ENCODE measurements at regions of chr5 and their contacts with region 1.

Region 1: GRCh38 chr5:69093771-69094482 is at the start of gene SLC30A5:
- DNase-seq: peak; percentile 99
- ATAC-seq: peak; percentile 99
- total RNA-seq, gene SLC30A5: 35.2 to 48.3 TPM

Region 2: GRCh38 chr5:69042915-69043658 is 50.8 kb before region 1 on chr5:
- intact Hi-C with region 1: loop called in 1 of 2 experiments (anchors 1 kb)
- DNase-seq: peak; percentile 58
- ATAC-seq: peak; percentile 95 to 97

Region 3: DNA sequence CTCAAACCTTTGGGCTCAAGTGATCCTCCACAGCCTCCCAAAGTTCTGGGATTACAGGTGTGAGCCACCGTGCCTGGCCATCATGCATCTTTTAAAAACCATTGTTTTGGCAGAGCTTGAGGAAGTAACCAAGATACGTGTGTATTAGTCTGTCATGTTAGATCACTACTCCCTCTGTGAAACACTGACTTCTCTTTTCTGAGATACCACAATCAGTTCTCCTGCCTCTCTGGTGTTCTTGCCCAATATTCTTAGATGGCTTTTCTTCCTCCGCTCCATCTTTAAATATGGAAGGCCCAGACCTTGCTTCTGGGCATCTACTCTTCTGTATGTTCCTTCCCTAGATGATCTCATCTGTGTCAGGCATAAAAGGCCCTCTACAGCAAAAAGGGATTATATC is 58.8 kb after region 1 on chr5:
- intact Hi-C with region 1: no loop called
- DNase-seq: no peak
- ATAC-seq: no peak

Region 4: GRCh38 chr5:69234457-69235268 is 140.7 kb after region 1 on chr5 and contains the start of gene CDK7:
- intact Hi-C with region 1: loop called in 1 of 2 experiments (anchors 10 kb)
- DNase-seq: peak; percentile 96
- ATAC-seq: peak; percentile 100
- total RNA-seq, gene CDK7: 11.1 to 14.4 TPM

Region 5: DNA sequence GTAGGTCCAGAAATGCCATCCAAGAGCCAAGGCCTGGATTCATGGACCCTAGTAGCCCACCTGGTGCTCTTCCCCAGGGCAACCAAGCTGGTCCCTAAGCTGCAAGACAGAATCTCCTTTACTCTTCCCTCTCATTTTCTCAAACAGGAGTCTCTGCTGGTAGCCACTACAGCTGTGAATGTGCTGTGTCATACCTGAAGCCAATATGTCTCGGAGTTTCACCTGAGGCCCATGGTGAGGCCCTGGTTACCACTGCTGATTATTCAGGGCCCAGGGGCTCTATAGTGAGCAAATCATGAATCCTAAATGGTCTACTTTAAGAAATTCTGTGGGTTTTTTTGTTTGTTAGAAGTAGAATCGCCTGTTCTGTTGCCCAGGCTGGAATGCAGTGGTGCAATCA is 156.7 kb after region 1 on chr5:
- intact Hi-C with region 1: no loop called
- DNase-seq: no peak
- ATAC-seq: no peak

Region 6: DNA sequence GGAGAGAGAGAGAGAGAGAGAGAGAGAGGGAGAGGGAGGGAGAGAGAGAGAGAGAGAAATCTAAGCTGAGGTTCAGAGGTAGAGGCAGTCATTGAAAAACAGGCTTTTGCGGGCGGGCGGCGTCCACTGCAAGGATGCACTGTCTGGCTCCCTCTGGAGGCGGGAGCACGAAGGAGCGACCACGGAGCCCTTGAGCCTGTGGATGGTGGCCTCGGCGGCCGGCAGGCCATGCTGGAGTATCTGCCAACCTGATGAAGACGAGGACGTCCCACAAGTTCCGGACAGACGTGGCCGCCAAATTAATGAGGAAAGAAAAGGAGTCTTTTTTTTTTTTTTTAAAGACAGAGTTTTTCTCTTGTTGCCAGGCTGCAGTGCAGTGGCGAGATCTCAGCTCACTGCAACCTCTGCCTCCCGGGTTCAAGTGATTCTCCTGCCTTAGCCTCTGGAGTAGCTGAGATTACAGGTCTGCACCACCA is 240.9 kb after region 1 on chr5:
- intact Hi-C with region 1: loop called in 1 of 2 experiments (anchors 10 kb)
- DNase-seq: peak; percentile 90
- ATAC-seq: peak; percentile 89 to 90

Region 7: DNA sequence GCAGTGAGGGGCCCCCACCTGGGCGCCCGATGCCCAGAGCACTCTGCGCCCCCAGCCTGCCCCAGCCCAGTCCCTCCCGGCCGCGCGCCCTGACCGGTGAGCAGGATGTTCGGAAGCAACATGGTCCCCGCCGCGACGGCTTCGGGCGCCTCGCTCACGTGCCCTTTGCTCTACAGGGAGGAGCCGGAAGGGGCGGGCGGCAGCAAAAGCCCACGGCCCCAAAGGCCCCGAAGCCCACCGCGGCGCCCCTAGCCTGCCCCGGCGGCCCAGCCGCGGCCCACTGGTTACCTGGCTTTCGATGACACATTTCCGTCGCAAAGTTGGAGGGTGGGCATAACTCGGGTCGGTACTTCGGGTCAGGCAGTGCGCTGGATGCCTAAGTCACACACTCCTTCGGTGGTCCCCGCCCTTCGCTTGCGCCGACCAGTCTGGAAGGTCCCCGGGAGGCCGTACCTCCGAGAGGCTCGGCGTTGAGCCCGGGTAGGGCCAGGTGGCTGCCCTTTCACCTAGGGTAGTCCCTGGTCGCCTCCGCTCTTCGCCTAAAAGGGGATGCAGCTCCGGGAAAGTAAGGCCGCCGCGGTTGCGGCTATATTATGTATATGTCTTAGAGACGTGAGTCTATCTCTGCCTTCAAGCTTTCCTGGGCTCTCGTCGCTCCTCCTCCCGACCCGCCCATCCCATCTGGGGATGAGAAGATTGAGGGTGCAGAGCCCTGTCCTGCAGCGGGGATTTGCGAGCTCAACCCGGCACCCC is 275.6 kb after region 1 on chr5 and contains the starts of genes AK6, RAD17 and TAF9:
- intact Hi-C with region 1: loop called in 1 of 2 experiments (anchors 5 kb)
- DNase-seq: peak; percentile 95
- ATAC-seq: peak; percentile 98 to 99
- total RNA-seq, gene AK6: 34.4 to 36.1 TPM
- total RNA-seq, gene RAD17: 15.0 to 17.4 TPM
- total RNA-seq, gene TAF9: 31.2 to 42.1 TPM